Activated naive CD4-positive, alpha-beta T cell treated with anti-CD3 and anti-CD28 coated beads for 36 hours (primary cell): ENCODE measurements at regions of chr11 and their contacts with region 1.

Region 1: DNA sequence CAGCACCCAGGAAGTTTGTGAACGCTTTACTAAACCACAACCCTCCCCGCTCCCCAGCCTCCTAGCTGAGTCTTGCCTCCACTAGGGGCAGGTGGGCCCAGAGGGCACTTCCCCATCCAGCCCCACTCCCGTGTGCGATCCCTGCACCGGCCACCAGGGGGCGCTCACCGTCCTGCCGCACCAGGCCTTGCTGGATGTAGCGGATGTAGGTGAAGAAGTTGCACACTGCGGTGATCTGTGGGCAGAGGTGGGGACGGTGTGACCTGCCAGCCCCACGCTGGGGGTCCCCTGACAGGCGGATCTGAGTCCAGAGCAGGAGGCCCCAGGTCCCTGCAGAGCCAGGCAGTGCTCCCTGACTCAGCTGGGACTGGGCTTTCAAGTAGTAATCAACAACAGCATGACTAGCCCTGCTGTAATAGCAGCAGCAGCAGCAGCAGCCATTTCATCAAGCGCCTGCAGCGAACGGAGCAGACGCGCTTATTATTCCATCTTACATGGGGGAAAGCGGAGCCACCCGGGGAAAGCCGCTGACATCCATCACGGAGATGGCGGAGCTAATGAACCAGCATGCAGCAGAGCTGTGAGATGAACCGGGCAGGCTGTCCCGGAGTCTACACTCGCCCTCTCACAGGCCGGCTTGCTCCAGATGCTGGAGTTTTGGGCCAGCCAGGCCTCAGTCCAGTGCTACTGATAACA is 7.9 kb upstream of the FADS3 start:
- DNase-seq: peak; percentile 93
- H3K4me3 Mint-ChIP-seq: no peak overlapping the region
- H3K27ac Mint-ChIP-seq: no peak overlapping the region
- H3K4me1 Mint-ChIP-seq: peaks cover 4% of the 10 kb centered on the region
- H3K27me3 Mint-ChIP-seq: no peaks in the 10 kb centered on the region

Region 2: DNA sequence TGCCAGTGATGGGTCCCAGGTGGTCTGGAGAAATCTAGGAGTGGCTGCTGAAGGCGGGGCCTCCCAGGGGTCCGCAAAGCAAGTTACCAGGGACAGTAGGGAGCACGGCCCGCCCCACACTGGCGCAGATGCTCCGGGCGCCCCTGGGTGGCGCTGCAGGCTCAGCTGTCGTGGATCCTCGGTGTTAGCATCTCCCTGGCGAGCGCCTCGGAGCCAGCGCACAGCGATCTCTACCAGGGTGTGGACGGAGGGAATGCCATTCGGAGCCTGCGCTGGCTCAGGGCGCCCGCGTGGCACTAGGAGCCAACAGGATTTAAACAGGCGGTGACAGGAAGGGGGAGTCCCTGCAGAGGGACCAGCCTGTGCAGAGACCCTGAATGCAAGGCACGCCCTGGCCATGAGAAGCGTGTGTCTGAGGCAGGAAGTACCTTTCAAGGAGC is 28.1 kb before region 1 on chr11:
- CTCF ChIA-PET with region 1: interaction called, 11 read pairs
- intact Hi-C with region 1: no loop called
- DNase-seq: peak; percentile 75
- H3K4me3 Mint-ChIP-seq: no peak overlapping the region
- H3K27ac Mint-ChIP-seq: no peak overlapping the region
- H3K4me1 Mint-ChIP-seq: peaks cover 2% of the 10 kb centered on the region
- H3K27me3 Mint-ChIP-seq: no peaks in the 10 kb centered on the region

Region 3: DNA sequence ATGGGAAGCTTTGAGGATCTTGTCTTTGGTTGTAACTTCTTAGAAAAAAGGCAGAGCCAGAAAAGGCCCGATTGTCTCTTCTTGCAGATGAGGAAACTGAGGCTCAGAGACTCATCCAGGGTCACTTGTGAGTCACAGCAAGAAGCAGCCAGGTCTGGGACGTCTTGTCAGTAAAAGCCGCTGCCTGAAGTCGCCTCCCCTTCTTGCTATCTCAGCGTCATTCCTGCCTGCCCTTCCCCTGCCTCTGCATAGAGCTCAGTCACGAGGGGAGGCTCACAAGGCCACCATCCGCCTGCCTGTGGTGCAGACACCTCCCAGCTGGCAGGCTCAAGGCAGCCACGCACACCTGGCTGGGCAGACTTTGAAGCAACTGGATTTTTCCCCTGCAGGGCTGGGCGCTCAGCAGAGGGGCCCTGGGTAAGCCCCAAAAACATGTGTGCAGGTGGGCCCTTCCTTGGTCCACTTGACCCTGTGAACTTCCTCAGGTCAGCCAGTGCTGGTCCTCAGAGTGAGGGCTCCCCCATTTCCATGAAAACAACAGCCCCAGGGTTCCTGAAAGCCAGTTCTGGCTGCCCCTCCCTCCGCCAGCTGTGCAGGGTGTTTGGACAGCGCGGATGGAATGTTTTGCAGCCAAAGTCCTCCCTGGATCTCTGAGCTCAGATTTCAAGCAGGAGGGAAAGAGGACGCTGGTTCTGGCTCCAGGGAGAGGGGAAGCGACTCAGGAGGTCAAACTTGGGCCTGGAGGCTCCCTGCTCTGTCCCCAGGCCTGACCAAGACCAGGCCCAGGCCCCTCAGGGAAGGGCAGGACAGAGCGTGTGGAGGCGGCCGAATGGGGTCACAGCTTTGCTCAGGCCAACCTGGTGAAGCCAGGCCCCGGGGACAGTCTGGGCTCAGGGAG is 24.1 kb after region 1 on chr11:
- CTCF ChIA-PET with region 1: interaction called, 15 read pairs
- intact Hi-C with region 1: no loop called
- DNase-seq: no peak
- H3K4me3 Mint-ChIP-seq: no peak overlapping the region
- H3K27ac Mint-ChIP-seq: no peak overlapping the region
- H3K4me1 Mint-ChIP-seq: no peaks in the 10 kb centered on the region
- H3K27me3 Mint-ChIP-seq: peaks cover 23% of the 10 kb centered on the region

Region 4: DNA sequence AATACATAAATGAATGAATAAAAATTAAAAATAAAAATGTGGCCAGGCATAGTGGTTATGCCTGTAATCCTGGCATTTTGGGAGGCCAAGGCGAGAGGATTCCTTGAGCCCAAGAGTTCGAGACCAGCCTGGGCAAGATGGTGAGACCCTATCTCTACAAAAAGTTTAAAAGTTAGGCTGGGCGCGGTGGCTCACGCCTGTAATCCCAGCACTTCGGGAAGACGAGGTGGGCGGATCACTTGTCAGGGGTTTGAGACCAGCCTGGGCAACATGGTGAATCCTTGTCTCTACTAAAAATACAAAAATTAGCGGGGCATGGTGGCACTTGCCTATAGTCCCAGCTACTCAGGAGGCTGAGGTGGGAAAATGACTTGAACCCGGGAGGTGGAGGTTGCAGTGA is 41.2 kb after region 1 on chr11:
- CTCF ChIA-PET with region 1: interaction called, 132 read pairs
- intact Hi-C with region 1: no loop called
- DNase-seq: no peak
- H3K4me3 Mint-ChIP-seq: no peak overlapping the region
- H3K27ac Mint-ChIP-seq: no peak overlapping the region
- H3K4me1 Mint-ChIP-seq: no peaks in the 10 kb centered on the region
- H3K27me3 Mint-ChIP-seq: peaks cover 3% of the 10 kb centered on the region

Region 5: GRCh38 chr11:62054484-62055121 is 155.3 kb after region 1 on chr11:
- CTCF ChIA-PET with region 1: interaction called, 12 read pairs
- intact Hi-C with region 1: loop called (anchors 1 kb)
- DNase-seq: peak; percentile 40
- H3K4me3 Mint-ChIP-seq: no peak overlapping the region
- H3K27ac Mint-ChIP-seq: no peak overlapping the region
- H3K4me1 Mint-ChIP-seq: no peaks in the 10 kb centered on the region
- H3K27me3 Mint-ChIP-seq: no peaks in the 10 kb centered on the region

Region 6: DNA sequence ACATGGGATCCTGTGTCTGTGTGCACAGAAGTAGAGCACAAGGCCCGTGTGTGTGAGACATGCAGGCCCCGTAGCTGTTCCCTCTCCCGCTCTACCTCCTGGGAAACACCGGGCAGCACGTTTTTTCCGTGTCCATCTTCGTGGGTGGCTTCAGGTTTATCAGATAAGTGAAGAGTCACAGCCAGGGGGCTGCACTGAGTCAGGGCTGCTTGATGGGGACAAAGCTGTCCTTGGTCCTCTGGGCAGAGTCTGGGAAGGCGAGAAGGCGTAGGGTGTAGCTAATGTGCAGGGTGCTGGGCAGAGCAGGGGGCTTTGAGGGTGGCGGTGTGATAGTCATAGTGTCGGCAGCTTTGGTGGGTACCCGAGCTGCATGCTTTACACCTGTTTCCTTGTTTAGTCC is 248.3 kb after region 1 on chr11:
- CTCF ChIA-PET with region 1: no interaction called
- intact Hi-C with region 1: no loop called
- DNase-seq: no peak
- H3K4me3 Mint-ChIP-seq: no peak overlapping the region
- H3K27ac Mint-ChIP-seq: no peak overlapping the region
- H3K4me1 Mint-ChIP-seq: no peaks in the 10 kb centered on the region
- H3K27me3 Mint-ChIP-seq: no peaks in the 10 kb centered on the region